ENCODE measurements at regions of chr10 and their contacts with region 1.

Region 1: GRCh38 chr10:6050801-6051445 is 11.2 kb downstream of the IL2RA start:
- DNase-seq: peak; percentile 96
- ATAC-seq: peak; percentile 66
- H3K4me3 ChIP-seq: peak overlapping the region; percentile 35 to 63 (median 55)
- H3K4me3 Mint-ChIP-seq: peak overlapping the region; percentile 91
- H3K27ac ChIP-seq: peak overlapping the region; percentile 92
- H3K27ac Mint-ChIP-seq: peak overlapping the region; percentile 99
- H3K4me1 ChIP-seq: peaks cover 69 to 82% of the 10 kb centered on the region in 2 donors
- H3K4me1 Mint-ChIP-seq: peaks cover 87% of the 10 kb centered on the region
- H3K27me3 ChIP-seq: no peaks in the 10 kb centered on the region
- H3K27me3 Mint-ChIP-seq: no peaks in the 10 kb centered on the region
- CTCF ChIP-seq: peak; percentile 35

Region 2: DNA sequence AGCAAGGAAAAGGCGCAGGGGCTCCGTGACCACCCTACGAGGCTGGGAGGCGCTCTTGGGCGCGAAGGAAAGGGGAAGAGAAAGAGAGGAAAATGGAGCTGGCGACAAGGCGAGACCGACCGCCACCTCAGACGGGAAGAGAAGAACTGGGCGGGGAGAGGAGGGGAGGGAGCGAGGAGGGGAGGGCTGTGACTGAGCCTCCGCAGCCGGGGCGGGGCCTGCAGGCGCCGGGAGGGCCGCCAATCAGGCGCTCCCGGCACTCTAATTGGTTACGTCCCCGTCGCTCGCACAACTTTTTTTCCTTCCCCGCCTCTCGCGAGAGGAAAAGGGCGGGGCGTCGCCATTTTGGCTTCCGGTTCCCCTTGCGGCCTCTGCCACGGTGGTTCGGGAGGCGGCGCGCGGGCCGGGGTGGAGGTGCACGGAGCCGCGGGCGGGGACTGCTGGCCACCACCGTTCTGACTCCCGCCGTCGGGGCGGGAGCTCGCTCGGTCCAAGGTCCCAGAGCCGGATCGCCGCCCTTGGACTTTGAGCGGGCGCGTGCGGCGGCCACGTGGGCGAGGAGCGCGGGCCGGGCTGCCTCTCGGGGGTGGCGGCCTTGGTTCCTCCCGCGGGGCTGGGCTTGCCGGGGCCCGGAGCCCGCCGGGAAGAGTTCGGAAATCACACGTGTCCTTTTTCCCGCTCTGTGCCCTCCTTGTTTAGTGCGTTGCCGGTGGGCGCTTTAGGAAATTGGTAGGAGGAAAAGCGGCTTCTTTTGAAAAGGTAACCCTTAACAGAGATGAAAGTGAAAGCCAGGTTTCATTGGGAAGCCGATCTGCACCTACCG is 237.4 kb before region 1 on chr10 and contains the start of gene GDI2:
- CTCF ChIA-PET with region 1: no interaction called
- POLR2A ChIA-PET with region 1: interaction called, 6 read pairs
- intact Hi-C with region 1: loop called (anchors 10 kb)
- DNase-seq: peak; percentile 98
- ATAC-seq: peak; percentile 87
- H3K4me3 ChIP-seq: peak within 1 kb of the TSS; percentile 77 to 98 (median 93)
- H3K4me3 Mint-ChIP-seq: peak within 1 kb of the TSS; percentile 91
- H3K27ac ChIP-seq: peak within 1 kb of the TSS; percentile 89 to 94
- H3K27ac Mint-ChIP-seq: peak within 1 kb of the TSS; percentile 96
- H3K4me1 ChIP-seq: peaks cover 66 to 73% of the 10 kb centered on the region in 2 donors
- H3K4me1 Mint-ChIP-seq: peaks cover 73% of the 10 kb centered on the region
- H3K27me3 ChIP-seq: no peaks in the 10 kb centered on the region
- H3K27me3 Mint-ChIP-seq: no peaks in the 10 kb centered on the region
- CTCF ChIP-seq: no peak
- total RNA-seq, gene GDI2: 187 and 189 TPM in 2 replicates

Region 3: GRCh38 chr10:5889624-5890451 is 161.1 kb before region 1 on chr10 and contains the starts of genes ANKRD16 and FBH1:
- CTCF ChIA-PET with region 1: interaction called, 3 read pairs
- POLR2A ChIA-PET with region 1: interaction called, 5 read pairs
- intact Hi-C with region 1: loop called (anchors 5 kb)
- DNase-seq: peak; percentile 99
- ATAC-seq: peak; percentile 84
- H3K4me3 ChIP-seq: peak within 1 kb of the TSS; percentile 51 to 88 (median 77)
- H3K4me3 Mint-ChIP-seq: peak within 1 kb of the TSS; percentile 94
- H3K27ac ChIP-seq: peak within 1 kb of the TSS; percentile 48 to 77
- H3K27ac Mint-ChIP-seq: peak within 1 kb of the TSS; percentile 88
- H3K4me1 ChIP-seq: peaks cover 28 to 33% of the 10 kb centered on the region in 2 donors
- H3K4me1 Mint-ChIP-seq: peaks cover 58% of the 10 kb centered on the region
- H3K27me3 ChIP-seq: no peaks in the 10 kb centered on the region
- H3K27me3 Mint-ChIP-seq: no peaks in the 10 kb centered on the region
- CTCF ChIP-seq: no peak
- total RNA-seq, gene ANKRD16: 12.6 and 13.1 TPM in 2 replicates
- total RNA-seq, gene FBH1: 129 and 138 TPM in 2 replicates

Region 4: GRCh38 chr10:6014241-6014761 is 36.6 kb before region 1 on chr10:
- CTCF ChIA-PET with region 1: interaction called, 104 read pairs
- POLR2A ChIA-PET with region 1: interaction called, 5 read pairs
- intact Hi-C with region 1: loop called (anchors 1 kb)
- DNase-seq: peak; percentile 79
- ATAC-seq: peak; percentile 79
- H3K4me3 ChIP-seq: no peak overlapping the region
- H3K4me3 Mint-ChIP-seq: no peak overlapping the region
- H3K27ac ChIP-seq: peak overlapping the region; percentile 34 to 57
- H3K27ac Mint-ChIP-seq: peak overlapping the region; percentile 67
- H3K4me1 ChIP-seq: peaks cover 4 to 9% of the 10 kb centered on the region in 2 donors
- H3K4me1 Mint-ChIP-seq: peaks cover 10% of the 10 kb centered on the region
- H3K27me3 ChIP-seq: no peaks in the 10 kb centered on the region
- H3K27me3 Mint-ChIP-seq: no peaks in the 10 kb centered on the region
- CTCF ChIP-seq: peak; percentile 86

Region 5: GRCh38 chr10:6068422-6068821 is 17.5 kb after region 1 on chr10:
- CTCF ChIA-PET with region 1: interaction called, 65 read pairs
- POLR2A ChIA-PET with region 1: interaction called, 43 read pairs
- intact Hi-C with region 1: loop called (anchors 1 kb)
- DNase-seq: peak; percentile 79
- ATAC-seq: peak; percentile 69
- H3K4me3 ChIP-seq: peak overlapping the region in 2 of 5 experiments; percentile 19 to 40
- H3K4me3 Mint-ChIP-seq: peak overlapping the region; percentile 85
- H3K27ac ChIP-seq: peak overlapping the region; percentile 80 to 91
- H3K27ac Mint-ChIP-seq: peak overlapping the region; percentile 99
- H3K4me1 ChIP-seq: peaks cover 59 to 64% of the 10 kb centered on the region in 2 donors
- H3K4me1 Mint-ChIP-seq: peaks cover 83% of the 10 kb centered on the region
- H3K27me3 ChIP-seq: no peaks in the 10 kb centered on the region
- H3K27me3 Mint-ChIP-seq: no peaks in the 10 kb centered on the region
- CTCF ChIP-seq: no peak

Region 6: GRCh38 chr10:7471720-7472367 is 1420.9 kb after region 1 on chr10:
- CTCF ChIA-PET with region 1: no interaction called
- POLR2A ChIA-PET with region 1: no interaction called
- intact Hi-C with region 1: loop called (anchors 2 kb)
- DNase-seq: peak; percentile 94
- ATAC-seq: peak; percentile 93
- H3K4me3 ChIP-seq: peak overlapping the region in 4 of 5 experiments; percentile 6 to 57 (median 30)
- H3K4me3 Mint-ChIP-seq: peak overlapping the region; percentile 80
- H3K27ac ChIP-seq: peak overlapping the region; percentile 71 to 78
- H3K27ac Mint-ChIP-seq: peak overlapping the region; percentile 83
- H3K4me1 ChIP-seq: peaks cover 70% of the 10 kb centered on the region in 2 donors
- H3K4me1 Mint-ChIP-seq: peaks cover 69% of the 10 kb centered on the region
- H3K27me3 ChIP-seq: no peaks in the 10 kb centered on the region
- H3K27me3 Mint-ChIP-seq: no peaks in the 10 kb centered on the region
- CTCF ChIP-seq: no peak

Measured in B cell (primary cell).